Endothelial cell of umbilical vein (primary cell): ENCODE measurements at regions of chr7 and their contacts with region 1.

Region 1: GRCh38 chr7:2785071-2785500 is 59.0 kb downstream of the GNA12 start:
- DNase-seq: peak; percentile 93
- H3K4me3 ChIP-seq: peak overlapping the region in 1 of 3 experiments; percentile 26
- H3K27ac ChIP-seq: peak overlapping the region; percentile 84
- H3K4me1 ChIP-seq: peaks cover 21% of the 10 kb centered on the region
- H3K27me3 ChIP-seq: no peaks in the 10 kb centered on the region
- CTCF ChIP-seq: no peak
- POLR2A ChIP-seq: no peak

Region 2: GRCh38 chr7:2613931-2614600 is 171.0 kb before region 1 on chr7:
- CTCF ChIA-PET with region 1: no interaction called
- POLR2A ChIA-PET with region 1: no interaction called
- dilution Hi-C with region 1: no loop called
- intact Hi-C with region 1: no loop called
- DNase-seq: no peak
- H3K4me3 ChIP-seq: no peak overlapping the region
- H3K27ac ChIP-seq: no peak overlapping the region
- H3K4me1 ChIP-seq: no peaks in the 10 kb centered on the region
- H3K27me3 ChIP-seq: no peaks in the 10 kb centered on the region
- CTCF ChIP-seq: no peak
- POLR2A ChIP-seq: no peak

Region 3: GRCh38 chr7:2757904-2758672 is 27.0 kb before region 1 on chr7:
- CTCF ChIA-PET with region 1: interaction called, 5 read pairs
- POLR2A ChIA-PET with region 1: no interaction called
- dilution Hi-C with region 1: no loop called
- intact Hi-C with region 1: loop called (anchors 1 kb)
- DNase-seq: peak; percentile 93
- H3K4me3 ChIP-seq: peak overlapping the region in 1 of 3 experiments; percentile 20
- H3K27ac ChIP-seq: peak overlapping the region; percentile 81
- H3K4me1 ChIP-seq: peaks cover 27% of the 10 kb centered on the region
- H3K27me3 ChIP-seq: no peaks in the 10 kb centered on the region
- CTCF ChIP-seq: no peak
- POLR2A ChIP-seq: no peak